ENCODE measurements at regions of chr18 and their contacts with region 1.

Region 1: GRCh38 chr18:76398896-76399612 is 96.0 kb downstream of the ZNF516 start:
- DNase-seq: peak; percentile 76
- ATAC-seq: peak; percentile 91
- H3K4me3 ChIP-seq: no peak overlapping the region
- H3K27ac ChIP-seq: no peak overlapping the region
- H3K4me1 ChIP-seq: 0 out of 2 replicates have a peak, but pooled peaks cover 8% of the 10 kb centered on the region
- H3K27me3 ChIP-seq: no peaks in the 10 kb centered on the region
- CTCF ChIP-seq: no peak

Region 2: DNA sequence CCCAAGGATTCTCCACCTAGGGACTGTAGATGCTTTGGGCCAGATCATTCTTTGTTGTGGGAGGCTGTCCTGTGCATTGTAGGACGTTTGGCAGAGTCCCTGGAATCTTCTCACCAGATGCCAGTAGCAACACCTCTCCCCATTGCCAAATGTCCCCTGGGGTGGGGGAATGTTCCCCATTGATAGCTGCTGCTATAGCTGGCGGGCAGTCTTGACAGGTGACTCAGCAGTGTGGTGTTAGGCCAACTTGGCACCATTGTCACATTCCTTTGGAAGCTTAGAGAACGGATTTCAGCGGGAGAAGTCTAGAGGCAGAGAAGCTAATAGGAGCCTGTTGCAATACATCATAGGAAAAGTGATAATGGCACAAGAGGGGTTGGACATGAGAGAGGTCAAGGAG is 475.9 kb before region 1 on chr18:
- CTCF ChIA-PET with region 1: no interaction called
- POLR2A ChIA-PET with region 1: no interaction called
- in situ Hi-C with region 1: no loop called
- intact Hi-C with region 1: no loop called
- DNase-seq: no peak
- ATAC-seq: peak; percentile 81
- H3K4me3 ChIP-seq: no peak overlapping the region
- H3K27ac ChIP-seq: no peak overlapping the region
- H3K4me1 ChIP-seq: no peaks in the 10 kb centered on the region
- H3K27me3 ChIP-seq: no peaks in the 10 kb centered on the region
- CTCF ChIP-seq: no peak

Region 3: DNA sequence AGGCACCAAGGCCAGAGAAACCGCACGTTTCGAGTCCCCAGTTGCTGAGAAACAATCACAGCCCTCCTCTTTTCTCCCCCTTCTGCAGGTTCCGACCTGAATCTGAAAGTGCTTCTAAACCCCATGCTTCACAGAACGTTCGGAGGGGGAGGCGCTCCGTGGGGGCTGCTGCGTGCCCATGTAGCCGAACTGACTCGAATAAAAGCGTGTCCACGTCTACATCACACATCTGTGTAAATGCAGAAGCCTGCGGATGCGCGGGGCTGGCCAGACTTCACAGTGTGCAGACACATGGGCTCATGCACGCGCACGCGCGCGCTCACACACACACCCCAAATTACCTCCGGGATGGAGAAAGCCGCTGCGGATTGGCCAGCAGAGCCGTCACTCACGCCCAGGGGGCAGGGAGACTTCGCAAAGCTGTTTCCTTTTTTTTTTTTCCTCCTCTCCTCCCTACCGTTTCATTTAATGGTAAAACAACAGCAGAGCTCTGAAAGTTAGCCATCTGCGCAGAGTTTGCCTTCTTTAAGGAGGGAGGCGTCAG is 93.7 kb after region 1 on chr18:
- CTCF ChIA-PET with region 1: no interaction called
- POLR2A ChIA-PET with region 1: no interaction called
- in situ Hi-C with region 1: no loop called
- intact Hi-C with region 1: loop called (anchors 5 kb)
- DNase-seq: peak; percentile 97
- ATAC-seq: peak; percentile 86
- H3K4me3 ChIP-seq: peak overlapping the region; percentile 62 to 97
- H3K27ac ChIP-seq: peak overlapping the region; percentile 83
- H3K4me1 ChIP-seq: peaks cover 39% of the 10 kb centered on the region
- H3K27me3 ChIP-seq: peaks cover 7% of the 10 kb centered on the region
- CTCF ChIP-seq: no peak

Region 4: GRCh38 chr18:76620321-76621170 is 221.5 kb after region 1 on chr18:
- CTCF ChIA-PET with region 1: interaction called, 3 read pairs
- POLR2A ChIA-PET with region 1: no interaction called
- in situ Hi-C with region 1: no loop called
- intact Hi-C with region 1: loop called (anchors 1 kb)
- DNase-seq: peak; percentile 12
- ATAC-seq: peak; percentile 93
- H3K4me3 ChIP-seq: peak overlapping the region; percentile 27 to 37
- H3K27ac ChIP-seq: no peak overlapping the region
- H3K4me1 ChIP-seq: peaks cover 20% of the 10 kb centered on the region
- H3K27me3 ChIP-seq: no peaks in the 10 kb centered on the region
- CTCF ChIP-seq: no peak

Region 5: DNA sequence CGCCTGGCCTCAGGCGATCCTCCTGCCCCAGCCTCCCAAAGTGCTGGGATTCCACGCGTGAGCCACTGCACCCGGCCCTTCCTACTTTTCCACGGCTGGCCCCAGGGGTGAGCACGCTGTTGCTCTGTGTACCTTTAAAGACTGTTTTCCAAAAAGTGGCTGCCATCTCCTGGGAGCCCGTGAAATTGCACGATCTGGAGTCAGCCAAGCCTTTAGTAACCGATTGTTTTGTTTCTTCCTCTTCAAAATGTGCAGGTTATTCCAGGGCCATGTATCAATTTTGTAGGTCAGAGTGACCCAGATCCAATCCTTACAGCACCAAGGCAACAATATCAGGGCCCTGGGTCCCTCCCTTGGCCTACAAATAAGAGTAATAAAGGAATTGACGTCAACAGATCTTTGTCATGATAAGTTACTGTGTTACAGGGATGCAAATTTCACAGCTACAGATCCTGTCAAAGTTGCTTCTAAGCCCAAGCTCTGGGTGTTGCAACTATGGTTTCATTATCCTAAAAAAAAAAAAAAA is 287.7 kb after region 1 on chr18:
- CTCF ChIA-PET with region 1: interaction called, 5 read pairs
- POLR2A ChIA-PET with region 1: no interaction called
- in situ Hi-C with region 1: no loop called
- intact Hi-C with region 1: loop called (anchors 1 kb)
- DNase-seq: peak; percentile 22
- ATAC-seq: peak; percentile 89
- H3K4me3 ChIP-seq: 0 out of 4 replicates have a peak overlapping the region, but pooled peaks of 1 of the 2 experiments have one; percentile 9
- H3K27ac ChIP-seq: no peak overlapping the region
- H3K4me1 ChIP-seq: peaks cover 11% of the 10 kb centered on the region
- H3K27me3 ChIP-seq: peaks cover 27% of the 10 kb centered on the region
- CTCF ChIP-seq: no peak

Region 6: GRCh38 chr18:76709659-76710645 is 310.9 kb after region 1 on chr18:
- CTCF ChIA-PET with region 1: interaction called, 16 read pairs
- POLR2A ChIA-PET with region 1: no interaction called
- in situ Hi-C with region 1: no loop called
- intact Hi-C with region 1: loop called (anchors 1 kb)
- DNase-seq: peak; percentile 38
- ATAC-seq: peak; percentile 89
- H3K4me3 ChIP-seq: peak overlapping the region in 1 of 2 experiments; percentile 21; a peak in 1 of 4 replicates
- H3K27ac ChIP-seq: no peak overlapping the region
- H3K4me1 ChIP-seq: no peaks in the 10 kb centered on the region
- H3K27me3 ChIP-seq: peaks cover 8% of the 10 kb centered on the region; the same call in 1 of the 2 replicates
- CTCF ChIP-seq: no peak